Panc1 (cell line): ENCODE measurements at regions of chr1 and their contacts with region 1.

Region 1: GRCh38 chr1:237809099-237809498 is 81.6 kb downstream of the ZP4 start:
- DNase-seq: no peak
- ATAC-seq: no peak
- H3K4me3 ChIP-seq: no peak overlapping the region
- H3K27ac ChIP-seq: no peak overlapping the region
- H3K4me1 ChIP-seq: no peaks in the 10 kb centered on the region
- H3K27me3 ChIP-seq: no peaks in the 10 kb centered on the region; the same call in 1 of the 2 replicates
- CTCF ChIP-seq: no peak

Region 2: GRCh38 chr1:236425031-236425663 is 1384.0 kb before region 1 on chr1:
- CTCF ChIA-PET with region 1: no interaction called
- POLR2A ChIA-PET with region 1: no interaction called
- in situ Hi-C with region 1: no loop called
- intact Hi-C with region 1: no loop called
- DNase-seq: no peak
- ATAC-seq: peak; percentile 69
- H3K4me3 ChIP-seq: no peak overlapping the region
- H3K27ac ChIP-seq: 0 out of 2 replicates have a peak overlapping the region, but pooled peaks have one; percentile 7
- H3K4me1 ChIP-seq: peaks cover 3% of the 10 kb centered on the region; the same call in 1 of the 2 replicates
- H3K27me3 ChIP-seq: no peaks in the 10 kb centered on the region
- CTCF ChIP-seq: no peak

Region 3: GRCh38 chr1:237492359-237492758 is 316.7 kb before region 1 on chr1:
- CTCF ChIA-PET with region 1: no interaction called
- POLR2A ChIA-PET with region 1: no interaction called
- in situ Hi-C with region 1: no loop called
- intact Hi-C with region 1: no loop called
- DNase-seq: no peak
- ATAC-seq: no peak
- H3K4me3 ChIP-seq: no peak overlapping the region
- H3K27ac ChIP-seq: no peak overlapping the region
- H3K4me1 ChIP-seq: no peaks in the 10 kb centered on the region
- H3K27me3 ChIP-seq: no peaks in the 10 kb centered on the region
- CTCF ChIP-seq: peak; percentile 27; the same call in 1 of the 2 replicates

Region 4: GRCh38 chr1:237677979-237678378 is 131.1 kb before region 1 on chr1:
- CTCF ChIA-PET with region 1: no interaction called
- POLR2A ChIA-PET with region 1: no interaction called
- in situ Hi-C with region 1: no loop called
- intact Hi-C with region 1: loop called (anchors 5 kb)
- DNase-seq: peak; percentile 15
- ATAC-seq: no peak
- H3K4me3 ChIP-seq: no peak overlapping the region
- H3K27ac ChIP-seq: no peak overlapping the region
- H3K4me1 ChIP-seq: no peaks in the 10 kb centered on the region
- H3K27me3 ChIP-seq: no peaks in the 10 kb centered on the region
- CTCF ChIP-seq: peak; percentile 22; the same call in 1 of the 2 replicates